Gastrocnemius medialis (tissue), 4 donors: ENCODE measurements at regions of chr10 and their contacts with region 1.

Region 1: GRCh38 chr10:129888784-129889616 is 75.1 kb downstream of the EBF3 start:
- DNase-seq: peak in 1 of 2 donors; percentile 25
- ATAC-seq: peak; percentile 30 to 34
- H3K4me3 ChIP-seq: no peak overlapping the region
- H3K27ac ChIP-seq: peak overlapping the region in 3 of 4 donors; percentile 5 to 12 (median 8)
- H3K4me1 ChIP-seq: peaks cover 17 to 21% of the 10 kb centered on the region in 2 donors
- H3K27me3 ChIP-seq: no peaks in the 10 kb centered on the region
- CTCF ChIP-seq: peak; percentile 33 to 65 (median 56)
- POLR2A ChIP-seq: no peak

Region 2: DNA sequence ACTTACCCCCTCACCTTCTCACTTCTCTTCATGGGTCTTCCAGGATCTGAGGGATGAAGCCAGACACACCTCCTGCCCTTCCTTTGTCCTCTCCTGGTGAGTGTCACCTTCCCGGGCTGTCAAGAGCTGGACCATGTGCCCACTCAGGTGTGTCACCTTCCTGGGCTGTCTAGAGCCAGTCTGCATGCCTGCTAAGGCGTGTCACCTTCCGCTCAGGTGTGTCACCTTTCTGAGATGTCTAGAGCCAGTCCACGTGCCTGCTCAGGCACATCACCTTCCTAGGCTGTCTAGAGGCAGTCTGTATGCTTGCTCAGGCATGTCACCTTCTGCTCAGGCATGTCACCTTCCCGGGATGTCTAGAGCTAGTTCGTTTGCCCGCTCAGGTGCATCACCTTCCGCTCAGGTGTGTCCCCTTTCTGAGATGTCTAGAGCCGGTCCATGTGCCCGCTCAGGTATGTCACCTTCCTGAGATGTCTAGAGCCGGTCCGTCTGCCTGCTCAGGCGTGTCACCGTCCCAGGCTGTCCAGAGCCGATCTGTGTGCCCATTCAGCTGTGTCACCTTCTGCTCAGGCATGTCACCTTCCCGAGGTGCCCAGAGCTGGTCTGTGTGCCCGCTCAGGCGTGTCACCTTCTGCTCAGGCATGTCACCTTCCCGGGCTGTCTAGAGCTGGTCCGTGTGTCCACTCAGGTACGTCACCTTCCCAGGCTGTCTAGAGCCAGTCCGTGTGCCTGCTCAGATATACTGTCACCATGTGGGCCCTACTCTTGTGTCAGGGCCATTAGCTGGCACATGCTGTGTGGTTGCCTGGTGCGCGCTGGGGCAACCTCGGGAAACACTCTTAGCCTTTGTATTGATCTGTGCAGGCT is 170.2 kb before region 1 on chr10:
- in situ Hi-C with region 1: no loop called
- intact Hi-C with region 1: no loop called
- DNase-seq: no peak
- ATAC-seq: no peak
- H3K4me3 ChIP-seq: no peak overlapping the region
- H3K27ac ChIP-seq: no peak overlapping the region
- H3K4me1 ChIP-seq: no peaks in the 10 kb centered on the region
- H3K27me3 ChIP-seq: no peaks in the 10 kb centered on the region
- CTCF ChIP-seq: no peak
- POLR2A ChIP-seq: no peak

Region 3: GRCh38 chr10:129958148-129958628 is 69.2 kb after region 1 on chr10:
- in situ Hi-C with region 1: no loop called
- intact Hi-C with region 1: loop called (anchors 5 kb)
- DNase-seq: no peak
- ATAC-seq: no peak
- H3K4me3 ChIP-seq: peak overlapping the region; percentile 53 to 79 (median 60)
- H3K27ac ChIP-seq: peak overlapping the region; percentile 76 to 84 (median 80)
- H3K4me1 ChIP-seq: peaks cover 8 to 20% of the 10 kb centered on the region in 2 donors
- H3K27me3 ChIP-seq: peaks cover 49 to 63% (median 57%) of the 10 kb centered on the region in 3 donors
- CTCF ChIP-seq: peak in 3 of 5 experiments; percentile 26 to 40 (median 28)
- POLR2A ChIP-seq: no peak

Region 4: GRCh38 chr10:129971381-129972144 is 82.6 kb after region 1 on chr10:
- in situ Hi-C with region 1: no loop called
- intact Hi-C with region 1: loop called (anchors 1 kb)
- DNase-seq: no peak
- ATAC-seq: peak; percentile 60 to 71
- H3K4me3 ChIP-seq: peak overlapping the region; percentile 40 to 60 (median 48)
- H3K27ac ChIP-seq: no peak overlapping the region
- H3K4me1 ChIP-seq: peaks cover 9 to 20% of the 10 kb centered on the region in 2 donors
- H3K27me3 ChIP-seq: peaks cover 59 to 64% (median 62%) of the 10 kb centered on the region in 3 donors
- CTCF ChIP-seq: peak in 4 of 5 experiments; percentile 51 to 84 (median 56)
- POLR2A ChIP-seq: no peak